ENCODE measurements at regions of chr6 and their contacts with region 1.

Region 1: GRCh38 chr6:153947808-153948447 is 91.1 kb upstream of the OPRM1 start:
- DNase-seq: peak; percentile 60
- H3K4me3 ChIP-seq: no peak overlapping the region
- H3K27ac ChIP-seq: no peak overlapping the region
- H3K4me1 ChIP-seq: no peaks in the 10 kb centered on the region
- H3K27me3 ChIP-seq: no peaks in the 10 kb centered on the region
- CTCF ChIP-seq: peak; percentile 96

Region 2: GRCh38 chr6:153553627-153554026 is 394.3 kb before region 1 on chr6:
- CTCF ChIA-PET with region 1: no interaction called
- POLR2A ChIA-PET with region 1: no interaction called
- intact Hi-C with region 1: loop called (anchors 5 kb)
- DNase-seq: peak; percentile 76
- H3K4me3 ChIP-seq: no peak overlapping the region
- H3K27ac ChIP-seq: no peak overlapping the region
- H3K4me1 ChIP-seq: peaks cover 6% of the 10 kb centered on the region
- H3K27me3 ChIP-seq: no peaks in the 10 kb centered on the region
- CTCF ChIP-seq: peak; percentile 73

Measured in A673 (cell line).